ENCODE measurements at regions of chr2 and their contacts with region 1.

Region 1: DNA sequence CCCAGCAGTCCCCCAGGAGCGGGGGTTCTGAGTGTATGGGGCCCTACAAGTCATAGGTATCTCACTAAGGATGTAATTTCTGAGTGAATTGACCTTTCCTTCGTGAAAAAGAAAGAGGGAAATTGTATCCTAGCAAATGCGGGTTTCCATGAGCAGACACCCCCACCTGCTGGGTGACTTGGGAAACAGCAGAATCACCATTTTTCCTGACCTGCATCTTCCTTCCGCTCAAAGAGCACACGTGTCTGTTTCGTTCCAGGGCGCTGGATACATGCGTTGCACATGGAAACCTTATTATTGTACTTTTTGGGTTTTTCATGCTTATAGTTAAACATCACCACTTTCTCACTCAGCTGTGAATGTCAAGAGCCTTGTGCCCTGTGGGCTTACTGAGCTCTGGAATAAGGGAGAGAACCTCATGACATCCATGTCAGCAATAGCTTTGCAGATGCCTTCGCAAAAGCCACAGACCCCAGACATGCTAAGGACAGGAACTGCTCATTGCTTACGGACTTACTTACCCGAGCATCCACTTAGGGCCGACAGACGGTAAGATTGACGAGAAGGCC is 132.8 kb downstream of the TPO start:
- DNase-seq: peak; percentile 28
- ATAC-seq: peak; percentile 33; the same call in 2 of the 3 replicates
- H3K4me3 ChIP-seq: no peak overlapping the region
- H3K27ac ChIP-seq: no peak overlapping the region
- H3K4me1 ChIP-seq: peaks cover 10% of the 10 kb centered on the region
- H3K27me3 ChIP-seq: peaks cover 4 to 27% of the 10 kb centered on the region in 2 experiments; a peak in 4 of 5 replicates
- CTCF ChIP-seq: peak; percentile 89
- EP300 ChIP-seq: no peak
- POLR2A ChIP-seq: no peak
- RAD21 ChIP-seq: peak; percentile 83

Region 2: GRCh38 chr2:714005-714741 is 831.9 kb before region 1 on chr2:
- CTCF ChIA-PET with region 1: interaction called, 6 read pairs
- POLR2A ChIA-PET with region 1: no interaction called
- in situ Hi-C with region 1: loop called (anchors 5 kb)
- intact Hi-C with region 1: loop called (anchors 1 kb)
- DNase-seq: peak; percentile 49
- ATAC-seq: peak; percentile 78
- H3K4me3 ChIP-seq: no peak overlapping the region
- H3K27ac ChIP-seq: no peak overlapping the region
- H3K4me1 ChIP-seq: no peaks in the 10 kb centered on the region
- H3K27me3 ChIP-seq: peaks cover 1 to 22% of the 10 kb centered on the region in 2 experiments; a peak in 4 of 5 replicates
- CTCF ChIP-seq: peak; percentile 70
- EP300 ChIP-seq: no peak
- POLR2A ChIP-seq: no peak
- RAD21 ChIP-seq: no peak

Region 3: DNA sequence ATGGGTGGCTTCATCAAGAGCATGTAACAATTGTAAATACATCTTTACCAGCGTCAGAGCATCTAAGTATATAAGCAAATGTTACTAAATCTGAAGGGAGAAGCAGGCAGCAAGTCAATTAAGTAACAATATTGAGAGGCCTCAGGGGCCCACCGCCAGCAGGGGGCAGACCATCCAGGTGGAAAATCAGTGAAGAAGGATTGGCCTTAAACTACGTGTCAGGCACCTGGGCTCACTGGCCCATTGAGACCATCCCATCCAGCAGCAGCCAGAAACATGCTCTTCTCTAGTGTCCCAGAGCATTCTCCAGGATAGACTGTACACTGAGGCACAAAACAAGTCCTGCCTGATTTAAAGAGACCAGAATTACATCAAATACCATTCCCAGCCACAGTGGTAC is 691.6 kb before region 1 on chr2:
- CTCF ChIA-PET with region 1: interaction called, 32 read pairs
- POLR2A ChIA-PET with region 1: no interaction called
- in situ Hi-C with region 1: loop called (anchors 5 kb)
- intact Hi-C with region 1: loop called (anchors 1 kb)
- DNase-seq: peak; percentile 34
- ATAC-seq: peak; percentile 72
- H3K4me3 ChIP-seq: no peak overlapping the region
- H3K27ac ChIP-seq: no peak overlapping the region
- H3K4me1 ChIP-seq: no peaks in the 10 kb centered on the region
- H3K27me3 ChIP-seq: peaks cover 8 to 34% of the 10 kb centered on the region in 2 experiments; a peak in 2 of 5 replicates
- CTCF ChIP-seq: peak; percentile 64
- EP300 ChIP-seq: no peak
- POLR2A ChIP-seq: no peak
- RAD21 ChIP-seq: peak; percentile 35; the same call in 1 of the 2 replicates

Region 4: GRCh38 chr2:1140389-1141003 is 405.6 kb before region 1 on chr2:
- CTCF ChIA-PET with region 1: no interaction called
- POLR2A ChIA-PET with region 1: no interaction called
- in situ Hi-C with region 1: loop called (anchors 25 kb)
- intact Hi-C with region 1: loop called (anchors 5 kb)
- DNase-seq: peak; percentile 24
- ATAC-seq: peak; percentile 98
- H3K4me3 ChIP-seq: no peak overlapping the region
- H3K27ac ChIP-seq: no peak overlapping the region
- H3K4me1 ChIP-seq: no peaks in the 10 kb centered on the region
- H3K27me3 ChIP-seq: peaks cover 0 to 9% of the 10 kb centered on the region in 2 experiments; a peak in 1 of 5 replicates
- CTCF ChIP-seq: peak; percentile 87
- EP300 ChIP-seq: no peak
- POLR2A ChIP-seq: no peak
- RAD21 ChIP-seq: no peak

Region 5: DNA sequence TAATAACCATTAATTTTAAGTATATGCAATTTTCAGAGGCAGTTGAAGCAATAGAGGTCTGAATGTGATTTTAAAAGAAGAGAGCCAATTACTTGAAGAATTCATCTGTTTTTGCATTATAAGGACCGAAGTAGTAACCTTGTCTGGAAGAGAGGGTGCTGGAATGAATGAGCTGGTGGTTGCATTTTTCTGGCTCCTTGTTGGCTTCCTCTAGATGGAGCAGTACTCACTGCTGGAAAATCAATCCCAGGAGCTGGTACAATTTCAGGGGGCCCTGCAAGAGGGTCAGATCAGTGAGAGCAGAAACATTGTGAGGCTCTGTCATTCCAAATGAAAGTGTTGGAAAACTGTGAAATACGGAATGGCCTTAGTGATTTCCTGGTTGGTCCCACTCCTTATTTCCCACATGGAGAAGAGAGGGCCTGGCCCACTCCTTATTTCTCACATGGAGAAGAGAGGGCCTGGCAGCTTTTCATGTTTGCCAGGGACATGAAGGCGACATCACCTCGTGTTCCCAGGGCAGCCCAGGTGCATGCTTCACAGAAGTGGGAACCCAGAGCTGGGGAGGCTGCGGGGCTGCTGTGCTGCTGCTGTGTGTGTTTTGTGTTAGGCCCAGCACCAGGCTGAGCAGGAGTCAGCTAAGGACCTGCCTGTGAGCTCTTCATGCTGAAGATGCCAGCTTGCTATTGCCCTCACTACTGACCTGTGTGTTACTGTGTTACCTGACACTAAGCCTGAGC is 398.1 kb before region 1 on chr2:
- CTCF ChIA-PET with region 1: no interaction called
- POLR2A ChIA-PET with region 1: no interaction called
- in situ Hi-C with region 1: loop called (anchors 25 kb)
- intact Hi-C with region 1: loop called (anchors 5 kb)
- DNase-seq: no peak
- ATAC-seq: peak; percentile 39; the same call in 1 of the 3 replicates
- H3K4me3 ChIP-seq: no peak overlapping the region
- H3K27ac ChIP-seq: no peak overlapping the region
- H3K4me1 ChIP-seq: no peaks in the 10 kb centered on the region
- H3K27me3 ChIP-seq: peaks cover 0 to 4% of the 10 kb centered on the region in 2 experiments; a peak in 1 of 5 replicates
- CTCF ChIP-seq: no peak
- EP300 ChIP-seq: no peak
- POLR2A ChIP-seq: no peak
- RAD21 ChIP-seq: no peak

Region 6: GRCh38 chr2:1246239-1246638 is 299.9 kb before region 1 on chr2:
- CTCF ChIA-PET with region 1: no interaction called
- POLR2A ChIA-PET with region 1: no interaction called
- in situ Hi-C with region 1: loop called (anchors 10 kb)
- intact Hi-C with region 1: loop called (anchors 5 kb)
- DNase-seq: no peak
- ATAC-seq: peak; percentile 41; the same call in 1 of the 3 replicates
- H3K4me3 ChIP-seq: no peak overlapping the region
- H3K27ac ChIP-seq: no peak overlapping the region
- H3K4me1 ChIP-seq: no peaks in the 10 kb centered on the region
- H3K27me3 ChIP-seq: peaks cover 0 to 12% of the 10 kb centered on the region in 2 experiments; a peak in 4 of 5 replicates
- CTCF ChIP-seq: 0 out of 2 replicates have a peak, but pooled peaks have one; percentile 10
- EP300 ChIP-seq: no peak
- POLR2A ChIP-seq: no peak
- RAD21 ChIP-seq: no peak

Region 7: GRCh38 chr2:1653956-1654695 is 108.0 kb after region 1 on chr2:
- CTCF ChIA-PET with region 1: no interaction called
- POLR2A ChIA-PET with region 1: no interaction called
- in situ Hi-C with region 1: no loop called
- intact Hi-C with region 1: no loop called
- DNase-seq: no peak
- ATAC-seq: no peak
- H3K4me3 ChIP-seq: no peak overlapping the region
- H3K27ac ChIP-seq: no peak overlapping the region
- H3K4me1 ChIP-seq: no peaks in the 10 kb centered on the region
- H3K27me3 ChIP-seq: peaks cover 7 to 41% of the 10 kb centered on the region in 2 experiments; a peak in 4 of 5 replicates
- CTCF ChIP-seq: no peak
- EP300 ChIP-seq: no peak
- POLR2A ChIP-seq: no peak
- RAD21 ChIP-seq: no peak

Measured in HepG2 (cell line).